IMR-90 (cell line): ENCODE measurements at regions of chr6 and their contacts with region 1.

Region 1: DNA sequence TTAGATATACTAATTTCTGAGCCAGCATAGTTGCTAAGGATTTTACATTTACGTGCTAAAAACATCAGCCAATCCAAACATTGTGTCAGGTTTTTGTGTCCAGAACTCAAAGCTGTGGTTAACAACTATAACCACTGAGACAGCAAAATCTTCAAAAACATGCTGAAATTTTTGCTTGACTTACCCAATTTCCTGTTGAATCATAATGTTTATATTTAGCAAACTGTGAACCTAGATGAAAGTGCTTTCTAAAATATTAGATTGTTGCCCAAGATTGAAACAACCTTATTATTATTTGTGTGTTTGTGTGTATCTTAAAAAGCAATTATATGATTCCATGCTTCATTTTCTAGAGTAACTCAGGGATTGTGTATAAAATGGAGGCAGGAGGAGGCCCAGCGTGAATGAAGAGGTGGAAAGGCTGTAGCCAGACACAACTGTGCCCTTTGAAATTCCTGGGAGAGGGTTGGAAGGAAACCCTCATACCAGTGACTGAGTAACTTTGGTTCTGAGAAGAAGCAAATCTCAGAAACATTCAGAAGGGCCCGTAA is 48.0 kb downstream of the ARMC2 start:
- DNase-seq: peak; percentile 92
- ATAC-seq: peak; percentile 83
- H3K4me3 ChIP-seq: no peak overlapping the region
- H3K27ac ChIP-seq: peak overlapping the region; percentile 98
- H3K4me1 ChIP-seq: peaks cover 13% of the 10 kb centered on the region
- H3K27me3 ChIP-seq: no peaks in the 10 kb centered on the region
- CTCF ChIP-seq: no peak
- POLR2A ChIP-seq: no peak
- RAD21 ChIP-seq: no peak

Region 2: DNA sequence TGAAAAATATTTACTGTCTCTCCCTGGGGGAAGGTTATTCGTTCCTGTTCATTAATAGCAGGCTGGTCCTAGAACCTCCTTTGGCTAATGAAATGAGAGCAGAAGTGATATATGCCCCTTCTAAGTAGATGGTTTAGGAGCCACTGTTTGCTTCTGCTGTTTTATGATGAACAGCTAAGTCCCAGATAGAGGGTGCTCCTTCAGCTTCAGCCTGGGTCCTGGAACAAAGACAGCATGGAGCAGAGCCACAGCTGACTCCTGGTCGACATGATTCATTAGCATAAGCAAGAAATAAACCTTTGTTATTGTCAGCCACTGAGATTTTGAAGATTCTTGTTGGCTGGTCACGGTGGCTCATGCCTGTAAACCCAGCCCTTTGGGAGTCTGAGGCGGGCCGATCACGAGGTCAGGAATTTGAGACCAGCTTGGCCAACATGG is 95.7 kb before region 1 on chr6:
- CTCF ChIA-PET with region 1: no interaction called
- POLR2A ChIA-PET with region 1: no interaction called
- dilution Hi-C with region 1: no loop called
- in situ Hi-C with region 1: no loop called
- intact Hi-C with region 1: no loop called
- DNase-seq: peak; percentile 15
- ATAC-seq: peak; percentile 61
- H3K4me3 ChIP-seq: no peak overlapping the region
- H3K27ac ChIP-seq: no peak overlapping the region
- H3K4me1 ChIP-seq: peaks cover 5% of the 10 kb centered on the region
- H3K27me3 ChIP-seq: peaks cover 2% of the 10 kb centered on the region
- CTCF ChIP-seq: no peak
- POLR2A ChIP-seq: no peak
- RAD21 ChIP-seq: no peak

Region 3: DNA sequence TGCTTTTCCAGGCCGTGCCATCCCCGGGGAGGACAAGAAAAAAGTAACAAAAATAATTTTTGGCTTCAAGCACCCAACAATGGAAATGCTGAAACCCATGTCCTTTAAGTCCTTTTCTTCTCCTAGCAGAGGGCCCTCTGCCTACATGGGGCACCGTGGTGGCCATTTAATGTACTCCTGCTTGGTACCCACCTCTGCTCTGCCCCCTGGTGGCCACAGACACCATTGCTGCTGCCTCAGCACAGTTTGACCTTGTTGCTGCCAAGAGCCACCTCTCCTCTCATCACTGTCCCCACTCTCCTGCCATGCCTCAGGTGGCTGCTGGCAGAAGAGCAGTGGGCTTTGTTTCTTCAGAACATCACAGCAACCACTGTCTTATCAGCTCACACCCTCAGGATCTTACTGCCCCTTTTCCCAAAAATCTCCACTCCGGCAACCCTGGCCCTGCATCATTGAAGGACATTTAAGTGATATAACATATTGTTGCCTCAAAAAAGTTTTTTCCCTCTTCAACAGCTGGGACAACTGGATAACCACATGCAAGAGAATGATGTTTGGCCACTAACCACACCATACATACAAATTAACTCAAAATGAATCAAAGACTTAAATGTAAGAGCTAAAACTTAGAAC is 60.9 kb before region 1 on chr6:
- CTCF ChIA-PET with region 1: no interaction called
- POLR2A ChIA-PET with region 1: no interaction called
- dilution Hi-C with region 1: no loop called
- in situ Hi-C with region 1: no loop called
- intact Hi-C with region 1: loop called (anchors 2 kb)
- DNase-seq: peak; percentile 72
- ATAC-seq: peak; percentile 90
- H3K4me3 ChIP-seq: no peak overlapping the region
- H3K27ac ChIP-seq: no peak overlapping the region
- H3K4me1 ChIP-seq: peaks cover 6% of the 10 kb centered on the region; the same call in 1 of the 2 replicates
- H3K27me3 ChIP-seq: no peaks in the 10 kb centered on the region; the same call in 1 of the 2 replicates
- CTCF ChIP-seq: peak; percentile 76
- POLR2A ChIP-seq: no peak
- RAD21 ChIP-seq: peak; percentile 80

Region 4: DNA sequence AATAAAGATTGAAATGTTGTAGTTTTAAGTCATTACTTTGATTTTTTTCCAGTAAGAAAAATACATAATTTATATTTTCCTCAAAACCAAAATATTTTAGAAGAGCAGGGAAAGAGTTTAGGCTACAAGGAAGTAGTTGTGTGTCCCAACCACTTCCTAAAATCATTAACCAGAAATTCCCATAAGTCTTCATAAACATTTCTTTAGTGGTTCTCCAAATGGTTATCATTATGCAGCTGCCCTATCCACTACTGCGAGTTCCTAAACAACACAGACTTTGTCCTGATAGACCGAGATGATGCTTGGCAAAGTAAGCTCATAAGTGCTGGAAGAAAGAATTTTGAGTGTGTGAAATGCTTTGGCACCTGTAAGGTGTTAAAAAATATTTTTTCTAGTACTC is 45.7 kb after region 1 on chr6:
- CTCF ChIA-PET with region 1: no interaction called
- POLR2A ChIA-PET with region 1: no interaction called
- dilution Hi-C with region 1: no loop called
- in situ Hi-C with region 1: no loop called
- intact Hi-C with region 1: no loop called
- DNase-seq: no peak
- ATAC-seq: no peak
- H3K4me3 ChIP-seq: no peak overlapping the region
- H3K27ac ChIP-seq: no peak overlapping the region
- H3K4me1 ChIP-seq: peaks cover 14% of the 10 kb centered on the region
- H3K27me3 ChIP-seq: no peaks in the 10 kb centered on the region
- CTCF ChIP-seq: no peak
- POLR2A ChIP-seq: no peak
- RAD21 ChIP-seq: no peak

Region 5: DNA sequence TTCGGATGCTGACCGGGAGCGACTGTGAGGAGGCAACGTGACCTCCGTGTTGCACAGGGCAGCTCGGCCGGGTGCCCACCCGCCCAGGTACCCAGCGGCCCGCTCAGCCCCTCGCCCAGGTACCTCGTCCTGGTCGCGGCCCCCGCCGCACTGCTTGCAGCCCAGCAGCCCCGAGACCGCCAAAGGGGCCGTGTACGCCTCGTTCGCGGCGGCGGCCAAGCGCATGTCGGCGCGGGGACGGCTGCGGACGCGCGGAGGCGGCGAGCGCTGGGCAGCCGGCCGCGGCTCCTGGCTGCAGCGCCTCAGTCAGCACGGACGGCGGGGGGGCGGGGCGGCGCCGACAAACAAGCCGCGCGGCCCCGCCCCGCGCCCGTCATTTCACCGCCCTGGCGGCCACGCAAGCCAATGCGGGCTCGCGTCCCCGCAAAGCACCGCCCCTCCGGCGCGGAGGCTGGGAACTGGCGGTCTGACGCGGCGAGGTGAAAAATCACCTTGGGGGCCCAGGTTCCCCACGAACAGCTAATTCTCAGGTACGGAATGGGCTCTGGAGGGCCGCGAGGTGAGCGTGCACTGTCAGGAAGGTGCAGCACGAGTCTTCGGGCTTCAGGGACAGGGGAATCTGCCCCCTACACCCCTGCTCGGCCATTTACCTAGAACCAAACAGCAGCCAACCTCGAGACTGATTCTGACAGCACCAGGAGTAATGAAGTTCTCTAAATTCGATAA is 113.2 kb after region 1 on chr6:
- CTCF ChIA-PET with region 1: no interaction called
- POLR2A ChIA-PET with region 1: no interaction called
- dilution Hi-C with region 1: no loop called
- in situ Hi-C with region 1: no loop called
- intact Hi-C with region 1: loop called (anchors 5 kb)
- DNase-seq: peak; percentile 82
- ATAC-seq: peak; percentile 100
- H3K4me3 ChIP-seq: peak overlapping the region; percentile 91
- H3K27ac ChIP-seq: peak overlapping the region; percentile 79
- H3K4me1 ChIP-seq: no peaks in the 10 kb centered on the region
- H3K27me3 ChIP-seq: no peaks in the 10 kb centered on the region
- CTCF ChIP-seq: no peak
- POLR2A ChIP-seq: no peak
- RAD21 ChIP-seq: no peak

Region 6: DNA sequence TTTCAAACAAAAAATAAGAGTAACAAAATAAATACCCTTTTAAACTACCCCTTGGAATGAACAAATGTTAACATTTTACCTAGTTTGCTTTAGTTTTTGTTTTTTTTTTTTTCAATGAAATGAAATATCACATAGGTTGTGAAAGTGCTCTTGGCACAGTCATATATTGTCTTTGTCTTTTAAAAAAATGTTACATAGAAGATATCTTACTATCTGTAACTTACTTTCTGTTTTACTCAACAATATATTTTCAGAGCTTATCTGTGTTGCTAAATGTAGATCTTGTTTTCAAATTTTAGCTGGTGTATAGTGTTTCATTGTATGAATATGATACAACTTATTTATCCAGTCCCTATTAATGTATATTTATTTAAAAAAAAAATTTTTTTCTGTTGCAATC is 207.8 kb after region 1 on chr6:
- CTCF ChIA-PET with region 1: no interaction called
- POLR2A ChIA-PET with region 1: no interaction called
- dilution Hi-C with region 1: no loop called
- in situ Hi-C with region 1: no loop called
- intact Hi-C with region 1: no loop called
- DNase-seq: no peak
- ATAC-seq: no peak
- H3K4me3 ChIP-seq: no peak overlapping the region
- H3K27ac ChIP-seq: no peak overlapping the region
- H3K4me1 ChIP-seq: no peaks in the 10 kb centered on the region
- H3K27me3 ChIP-seq: no peaks in the 10 kb centered on the region
- CTCF ChIP-seq: no peak
- POLR2A ChIP-seq: no peak
- RAD21 ChIP-seq: no peak